ENCODE measurements at regions of chr14 and their contacts with region 1.

Region 1: GRCh38 chr14:54566410-54567223 is at the start of gene SAMD4A:
- DNase-seq: peak; percentile 17 to 69 (median 49)
- ATAC-seq: peak; percentile 20 to 46 (median 30)
- H3K4me3 ChIP-seq: peak within 1 kb of the TSS; percentile 68 to 95
- H3K4me3 Mint-ChIP-seq: peak within 1 kb of the TSS; percentile 90 to 97 (median 91)
- H3K27ac ChIP-seq: peak within 1 kb of the TSS; percentile 23
- H3K27ac Mint-ChIP-seq: peak within 1 kb of the TSS; percentile 46 to 89
- H3K4me1 ChIP-seq: peaks cover 6 to 33% of the 10 kb centered on the region in 2 experiments
- H3K4me1 Mint-ChIP-seq: peaks cover 13 to 21% (median 15%) of the 10 kb centered on the region in 3 donors
- H3K27me3 ChIP-seq: peaks cover 6 to 32% of the 10 kb centered on the region in 2 experiments
- H3K27me3 Mint-ChIP-seq: peaks cover 0 to 10% of the 10 kb centered on the region in 2 donors
- total RNA-seq, gene SAMD4A: 1.2 to 3.9 (median 1.3) TPM

Region 2: GRCh38 chr14:54299410-54300363 is 266.9 kb before region 1 on chr14:
- CTCF ChIA-PET with region 1: no interaction called
- POLR2A ChIA-PET with region 1: no interaction called
- DNase-seq: no peak
- ATAC-seq: no peak
- H3K4me3 ChIP-seq: no peak overlapping the region
- H3K4me3 Mint-ChIP-seq: no peak overlapping the region
- H3K27ac ChIP-seq: no peak overlapping the region
- H3K27ac Mint-ChIP-seq: no peak overlapping the region
- H3K4me1 ChIP-seq: no peaks in the 10 kb centered on the region
- H3K4me1 Mint-ChIP-seq: no peaks in the 10 kb centered on the region
- H3K27me3 ChIP-seq: peaks cover 0 to 2% of the 10 kb centered on the region in 2 experiments
- H3K27me3 Mint-ChIP-seq: peaks cover 16 to 35% of the 10 kb centered on the region in 2 donors

Region 3: GRCh38 chr14:54475187-54475899 is 91.3 kb before region 1 on chr14:
- CTCF ChIA-PET with region 1: no interaction called
- POLR2A ChIA-PET with region 1: no interaction called
- DNase-seq: no peak
- ATAC-seq: no peak
- H3K4me3 ChIP-seq: no peak overlapping the region
- H3K4me3 Mint-ChIP-seq: no peak overlapping the region
- H3K27ac ChIP-seq: no peak overlapping the region
- H3K27ac Mint-ChIP-seq: peak overlapping the region in 1 of 2 donors; percentile 5
- H3K4me1 ChIP-seq: no peaks in the 10 kb centered on the region
- H3K4me1 Mint-ChIP-seq: peaks cover 2 to 7% (median 5%) of the 10 kb centered on the region in 3 donors
- H3K27me3 ChIP-seq: no peaks in the 10 kb centered on the region
- H3K27me3 Mint-ChIP-seq: no peaks in the 10 kb centered on the region

Region 4: GRCh38 chr14:54622192-54622958 is 55.8 kb after region 1 on chr14:
- CTCF ChIA-PET with region 1: interaction called in 1 of 2 experiments, 10 read pairs
- POLR2A ChIA-PET with region 1: interaction called in 1 of 2 experiments, 3 read pairs
- DNase-seq: no peak
- ATAC-seq: no peak
- H3K4me3 ChIP-seq: no peak overlapping the region
- H3K4me3 Mint-ChIP-seq: no peak overlapping the region
- H3K27ac ChIP-seq: no peak overlapping the region
- H3K27ac Mint-ChIP-seq: peak overlapping the region in 1 of 2 donors; percentile 77
- H3K4me1 ChIP-seq: peaks cover 3 to 9% of the 10 kb centered on the region in 2 experiments
- H3K4me1 Mint-ChIP-seq: peaks cover 17 to 31% (median 27%) of the 10 kb centered on the region in 3 donors
- H3K27me3 ChIP-seq: no peaks in the 10 kb centered on the region
- H3K27me3 Mint-ChIP-seq: no peaks in the 10 kb centered on the region

Region 5: DNA sequence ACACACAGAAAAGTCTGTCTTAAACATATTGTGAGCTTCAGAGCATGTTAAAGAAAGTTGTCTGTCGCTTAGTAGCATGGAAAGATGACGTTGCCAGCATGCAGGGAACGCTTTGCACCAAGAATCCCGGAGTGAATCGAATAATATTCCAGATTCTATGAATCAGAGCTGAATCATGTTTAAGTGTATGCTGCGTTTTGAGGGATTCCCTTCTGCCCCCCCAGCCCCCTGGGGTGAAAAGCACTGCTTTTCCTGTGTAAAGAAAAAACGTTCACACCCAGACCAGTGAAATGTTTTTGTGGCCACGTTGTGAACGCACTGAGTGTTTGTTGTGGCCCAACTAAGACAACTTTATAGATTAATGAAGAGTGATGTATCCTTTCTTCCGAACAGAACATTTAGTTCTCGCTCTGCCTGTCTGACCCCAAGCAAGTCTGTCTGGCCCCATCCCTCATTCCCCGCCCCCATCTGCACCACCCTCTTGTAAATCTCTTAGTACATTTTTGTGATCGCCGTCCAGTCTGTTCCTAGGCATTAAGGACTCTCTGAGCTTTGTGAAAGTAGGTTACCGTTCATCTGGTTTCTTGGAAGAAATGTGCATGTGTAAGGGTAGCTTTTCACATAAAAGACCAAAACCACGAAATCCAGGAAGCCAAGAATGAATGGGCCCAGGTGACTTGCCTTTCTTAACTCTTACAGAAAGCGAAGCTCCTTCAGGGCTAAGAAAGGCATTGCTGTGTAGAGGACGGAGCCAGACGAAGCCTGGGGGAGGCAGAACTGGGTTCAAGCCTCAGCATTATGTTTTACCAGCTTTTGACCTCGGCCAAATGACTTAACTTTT is 103.3 kb after region 1 on chr14:
- CTCF ChIA-PET with region 1: interaction called in 1 of 2 experiments, 12 read pairs
- POLR2A ChIA-PET with region 1: interaction called in 1 of 2 experiments, 5 read pairs
- DNase-seq: peak in 30 of 35 experiments; percentile 0 to 52 (median 24)
- ATAC-seq: peak in 2 of 4 experiments; percentile 35 to 75
- H3K4me3 ChIP-seq: no peak overlapping the region
- H3K4me3 Mint-ChIP-seq: no peak overlapping the region
- H3K27ac ChIP-seq: no peak overlapping the region
- H3K27ac Mint-ChIP-seq: no peak overlapping the region
- H3K4me1 ChIP-seq: peaks cover 0 to 23% of the 10 kb centered on the region in 2 experiments
- H3K4me1 Mint-ChIP-seq: peaks cover 6 to 16% (median 13%) of the 10 kb centered on the region in 3 donors
- H3K27me3 ChIP-seq: peaks cover 0 to 22% of the 10 kb centered on the region in 2 experiments
- H3K27me3 Mint-ChIP-seq: peaks cover 3 to 6% of the 10 kb centered on the region in 2 donors

Region 6: GRCh38 chr14:54722781-54723432 is 156.3 kb after region 1 on chr14:
- CTCF ChIA-PET with region 1: interaction called, 4 to 19 read pairs
- POLR2A ChIA-PET with region 1: no interaction called
- DNase-seq: peak in 1 of 35 experiments; percentile 39
- ATAC-seq: no peak
- H3K4me3 ChIP-seq: no peak overlapping the region
- H3K4me3 Mint-ChIP-seq: no peak overlapping the region
- H3K27ac ChIP-seq: no peak overlapping the region
- H3K27ac Mint-ChIP-seq: no peak overlapping the region
- H3K4me1 ChIP-seq: no peaks in the 10 kb centered on the region
- H3K4me1 Mint-ChIP-seq: peaks cover 0 to 8% (median 2%) of the 10 kb centered on the region in 3 donors
- H3K27me3 ChIP-seq: peaks cover 0 to 9% of the 10 kb centered on the region in 2 experiments
- H3K27me3 Mint-ChIP-seq: peaks cover 17 to 24% of the 10 kb centered on the region in 2 donors

Region 7: DNA sequence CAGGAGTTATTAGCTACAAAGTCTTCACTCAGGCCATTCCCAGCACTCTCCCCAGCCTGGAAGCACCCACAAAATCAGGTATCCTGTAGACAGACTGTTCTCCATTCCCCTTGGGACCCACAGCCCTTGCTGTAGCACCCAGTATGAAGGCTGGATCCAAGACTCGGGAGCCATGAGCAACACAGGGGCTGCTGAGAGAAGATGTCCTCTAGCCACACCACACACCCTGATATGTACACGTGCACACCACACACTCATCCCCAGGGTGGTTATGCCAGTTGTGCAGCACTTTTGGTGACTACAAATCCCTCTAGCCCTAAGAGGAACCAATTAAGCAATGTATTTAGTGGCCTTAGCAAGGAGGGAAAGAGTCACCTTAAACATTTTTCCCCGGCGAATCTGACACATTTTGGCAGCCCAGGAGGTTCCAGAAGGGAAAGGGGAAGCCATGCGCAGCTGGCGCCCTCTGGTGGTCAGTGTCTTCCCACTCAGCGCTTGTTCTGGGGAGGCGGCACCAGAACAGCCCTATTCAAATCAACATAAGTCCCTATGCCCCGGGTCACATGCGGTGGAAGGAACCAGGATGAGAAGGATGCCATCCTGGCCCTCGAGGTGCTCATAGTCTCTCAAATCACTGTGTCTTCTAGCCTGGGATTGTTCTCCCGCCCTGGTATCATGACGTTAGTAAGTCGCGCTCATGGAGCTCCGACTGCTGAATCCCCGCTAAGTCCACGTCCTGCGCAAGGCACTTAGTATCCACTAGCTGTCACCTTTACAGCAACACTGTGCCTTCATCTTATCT is 239.1 kb after region 1 on chr14:
- CTCF ChIA-PET with region 1: interaction called, 5 to 15 read pairs
- POLR2A ChIA-PET with region 1: no interaction called
- DNase-seq: peak; percentile 14 to 80 (median 57)
- ATAC-seq: peak; percentile 76 to 81 (median 78)
- H3K4me3 ChIP-seq: no peak overlapping the region
- H3K4me3 Mint-ChIP-seq: peak overlapping the region in 1 of 3 donors; percentile 15
- H3K27ac ChIP-seq: no peak overlapping the region
- H3K27ac Mint-ChIP-seq: no peak overlapping the region
- H3K4me1 ChIP-seq: peaks cover 0 to 6% of the 10 kb centered on the region in 2 experiments
- H3K4me1 Mint-ChIP-seq: peaks cover 3 to 6% (median 4%) of the 10 kb centered on the region in 3 donors
- H3K27me3 ChIP-seq: peaks cover 0 to 34% of the 10 kb centered on the region in 2 experiments
- H3K27me3 Mint-ChIP-seq: peaks cover 5 to 15% of the 10 kb centered on the region in 2 donors

Region 8: DNA sequence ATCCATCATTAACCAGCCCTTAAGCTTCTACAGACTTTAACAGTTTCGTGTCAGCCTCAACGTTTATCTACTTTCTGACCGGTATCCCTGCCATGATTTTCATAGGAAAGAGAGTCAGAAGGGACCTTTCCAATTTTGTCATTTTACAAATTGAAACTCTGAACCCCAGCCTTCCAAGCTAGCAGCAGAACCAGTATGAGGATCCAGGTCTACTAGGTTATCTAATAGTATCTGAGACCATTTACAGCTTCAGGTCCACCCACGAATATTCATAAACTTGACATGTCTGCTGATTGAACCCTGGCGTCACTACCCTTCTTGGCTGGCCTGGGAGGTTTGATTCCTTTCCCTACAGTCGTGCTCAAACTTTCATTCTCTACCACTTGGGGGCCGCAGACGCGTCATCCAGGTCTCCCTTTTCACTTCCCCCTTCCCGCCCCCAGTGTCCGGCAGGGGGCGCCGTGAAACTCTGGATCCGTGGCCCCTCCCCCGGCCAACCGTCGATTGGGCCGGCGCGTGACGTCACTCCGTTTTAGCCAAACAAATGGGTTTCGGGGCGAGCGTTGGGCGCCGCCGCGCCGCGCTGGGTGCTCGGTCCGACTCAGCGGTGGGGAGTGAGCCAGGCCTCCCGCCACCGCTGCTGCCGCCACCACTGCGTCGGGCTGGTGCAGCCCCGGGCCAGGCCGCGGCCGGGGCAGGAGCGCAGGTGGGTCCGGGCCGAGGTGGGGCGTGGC is 704.4 kb after region 1 on chr14 and contains the start of gene FBXO34:
- CTCF ChIA-PET with region 1: no interaction called
- POLR2A ChIA-PET with region 1: no interaction called
- DNase-seq: peak; percentile 94 to 100 (median 99)
- ATAC-seq: peak; percentile 89 to 95 (median 90)
- H3K4me3 ChIP-seq: peak within 1 kb of the TSS; percentile 71 to 97
- H3K4me3 Mint-ChIP-seq: peak within 1 kb of the TSS; percentile 86 to 92 (median 88)
- H3K27ac ChIP-seq: peak within 1 kb of the TSS; percentile 78
- H3K27ac Mint-ChIP-seq: peak within 1 kb of the TSS; percentile 78 to 88
- H3K4me1 ChIP-seq: peaks cover 4 to 8% of the 10 kb centered on the region in 2 experiments
- H3K4me1 Mint-ChIP-seq: peaks cover 38 to 41% (median 40%) of the 10 kb centered on the region in 3 donors
- H3K27me3 ChIP-seq: no peaks in the 10 kb centered on the region
- H3K27me3 Mint-ChIP-seq: no peaks in the 10 kb centered on the region
- total RNA-seq, gene FBXO34: 22.1 to 36.9 (median 28.7) TPM

Measured in T-cell (primary cell).